CD8-positive, alpha-beta memory T cell (primary cell): ENCODE measurements at regions of chr15 and their contacts with region 1.

Region 1: DNA sequence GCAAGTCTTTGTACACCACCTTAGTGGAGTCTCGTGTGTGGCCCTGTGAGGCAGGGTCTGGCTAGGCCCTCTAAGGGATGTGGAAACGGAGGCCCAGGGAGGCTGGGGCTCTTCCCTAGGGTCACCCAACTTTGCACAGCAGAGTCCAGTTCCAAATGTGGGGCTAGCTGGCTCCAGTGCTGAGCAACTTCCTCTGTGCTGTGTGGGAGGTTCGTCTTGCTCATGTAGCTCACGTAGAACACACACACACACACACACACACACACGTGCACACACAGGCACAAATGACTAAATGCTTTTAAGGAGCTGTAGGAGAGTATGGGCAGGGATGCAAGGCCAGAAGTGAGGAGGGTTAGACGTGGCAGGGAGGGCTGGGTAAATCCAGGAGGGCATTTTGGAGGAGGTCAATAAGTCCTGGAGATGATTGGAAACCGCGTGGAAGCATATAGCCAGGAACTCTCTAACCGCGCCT is 213.8 kb downstream of the RPLP1 start:
- DNase-seq: peak in 1 of 5 donors; percentile 55
- H3K4me3 ChIP-seq: no peak overlapping the region
- H3K4me3 Mint-ChIP-seq: peak overlapping the region in 3 of 7 donors; percentile 36 to 48 (median 45)
- H3K27ac ChIP-seq: no peak overlapping the region
- H3K27ac Mint-ChIP-seq: peak overlapping the region in 6 of 8 donors; percentile 34 to 83 (median 68)
- H3K4me1 ChIP-seq: peaks cover 43% of the 10 kb centered on the region
- H3K4me1 Mint-ChIP-seq: peaks cover 62 to 83% (median 74%) of the 10 kb centered on the region in 3 donors
- H3K27me3 ChIP-seq: no peaks in the 10 kb centered on the region
- H3K27me3 Mint-ChIP-seq: no peaks in the 10 kb centered on the region

Region 2: GRCh38 chr15:69643476-69643875 is 23.0 kb before region 1 on chr15:
- CTCF ChIA-PET with region 1: no interaction called
- POLR2A ChIA-PET with region 1: interaction called, 13 read pairs
- DNase-seq: no peak
- H3K4me3 ChIP-seq: no peak overlapping the region
- H3K4me3 Mint-ChIP-seq: no peak overlapping the region
- H3K27ac ChIP-seq: no peak overlapping the region
- H3K27ac Mint-ChIP-seq: no peak overlapping the region
- H3K4me1 ChIP-seq: no peaks in the 10 kb centered on the region
- H3K4me1 Mint-ChIP-seq: peaks cover 0 to 2% (median 1%) of the 10 kb centered on the region in 3 donors
- H3K27me3 ChIP-seq: no peaks in the 10 kb centered on the region
- H3K27me3 Mint-ChIP-seq: peaks cover 0 to 6% of the 10 kb centered on the region in 2 donors

Region 3: DNA sequence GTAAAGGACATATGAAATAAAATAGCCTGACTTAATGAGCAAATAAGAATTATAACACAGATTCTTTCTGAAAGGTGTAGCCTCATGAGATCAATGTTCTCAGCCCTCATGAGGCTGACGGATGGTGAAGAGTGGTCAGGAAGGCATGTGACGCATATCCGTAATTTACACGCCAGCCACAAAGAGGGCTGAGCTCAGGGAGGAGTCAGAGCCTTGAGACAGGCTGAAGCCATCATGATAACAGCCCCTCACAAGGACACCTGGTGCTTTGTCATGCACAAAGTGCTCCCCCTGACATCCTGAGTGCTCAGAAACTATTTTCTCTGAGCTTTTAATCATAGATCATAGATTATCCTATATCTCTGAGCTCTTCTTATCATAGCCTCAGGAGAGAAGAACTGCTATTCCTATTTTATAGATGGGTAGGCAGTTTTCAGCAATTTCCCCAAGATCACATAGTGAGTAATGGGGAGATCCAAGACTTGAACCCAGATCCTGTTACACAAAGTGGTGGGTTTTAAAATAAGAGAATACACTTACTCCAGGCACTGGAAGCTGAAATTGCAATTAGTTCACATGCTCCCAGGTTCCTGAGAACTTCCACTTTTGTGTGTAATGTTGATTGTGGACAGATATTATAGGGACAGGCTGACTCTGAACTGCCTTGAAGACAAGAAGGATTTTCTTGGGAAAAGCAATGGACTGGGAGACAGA is 53.2 kb after region 1 on chr15:
- CTCF ChIA-PET with region 1: interaction called, 4 read pairs
- POLR2A ChIA-PET with region 1: interaction called, 13 read pairs
- DNase-seq: peak; percentile 59 to 89 (median 62)
- H3K4me3 ChIP-seq: no peak overlapping the region
- H3K4me3 Mint-ChIP-seq: peak overlapping the region in 6 of 7 donors; percentile 28 to 84 (median 58)
- H3K27ac ChIP-seq: peak overlapping the region; percentile 58
- H3K27ac Mint-ChIP-seq: peak overlapping the region; percentile 93 to 99 (median 98)
- H3K4me1 ChIP-seq: peaks cover 77% of the 10 kb centered on the region
- H3K4me1 Mint-ChIP-seq: peaks cover 91 to 99% (median 99%) of the 10 kb centered on the region in 3 donors
- H3K27me3 ChIP-seq: no peaks in the 10 kb centered on the region
- H3K27me3 Mint-ChIP-seq: peaks cover 0 to 1% of the 10 kb centered on the region in 2 donors